IMR-90 (cell line): ENCODE measurements at regions of chr1 and their contacts with region 1.

Region 1: DNA sequence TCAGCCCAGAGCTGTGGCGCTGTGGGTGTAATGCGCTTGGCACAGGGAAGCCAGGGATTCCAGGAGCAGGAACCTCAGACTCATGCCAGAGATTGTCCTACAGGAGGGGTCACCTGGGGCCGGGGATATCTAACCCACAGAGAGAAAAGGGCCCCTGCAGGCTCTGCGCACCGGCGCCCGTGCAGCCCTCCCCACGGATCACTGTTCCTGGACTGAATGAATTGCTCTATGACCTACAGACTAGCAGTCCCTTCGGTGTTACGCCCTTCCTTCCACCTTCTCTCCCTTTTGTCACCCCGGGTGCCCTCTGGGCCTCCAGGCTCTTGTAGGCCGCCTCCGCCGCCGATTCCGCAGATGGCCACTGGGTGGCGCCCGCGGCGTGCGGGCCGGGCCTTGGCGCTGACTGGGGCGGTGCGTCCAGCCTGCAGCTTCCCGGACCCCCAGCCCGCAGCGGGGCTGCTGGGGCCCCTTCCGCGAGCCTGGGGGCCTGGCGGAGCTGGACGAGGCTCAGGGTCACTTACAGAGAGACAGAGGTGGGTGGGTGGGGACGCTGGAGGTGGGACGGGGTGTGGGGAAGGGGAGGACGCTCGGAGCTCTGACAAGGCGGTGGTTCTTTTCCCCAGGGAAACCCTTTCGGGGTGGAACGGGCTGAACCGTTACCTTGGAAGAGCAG is 101.3 kb downstream of the IER5 start:
- DNase-seq: peak; percentile 29
- ATAC-seq: peak; percentile 99
- H3K4me3 ChIP-seq: peak overlapping the region; percentile 26; the same call in 1 of the 2 replicates
- H3K27ac ChIP-seq: no peak overlapping the region
- H3K4me1 ChIP-seq: no peaks in the 10 kb centered on the region
- H3K27me3 ChIP-seq: peaks cover 25% of the 10 kb centered on the region
- CTCF ChIP-seq: peak; percentile 96
- POLR2A ChIP-seq: no peak
- RAD21 ChIP-seq: peak; percentile 92

Region 2: DNA sequence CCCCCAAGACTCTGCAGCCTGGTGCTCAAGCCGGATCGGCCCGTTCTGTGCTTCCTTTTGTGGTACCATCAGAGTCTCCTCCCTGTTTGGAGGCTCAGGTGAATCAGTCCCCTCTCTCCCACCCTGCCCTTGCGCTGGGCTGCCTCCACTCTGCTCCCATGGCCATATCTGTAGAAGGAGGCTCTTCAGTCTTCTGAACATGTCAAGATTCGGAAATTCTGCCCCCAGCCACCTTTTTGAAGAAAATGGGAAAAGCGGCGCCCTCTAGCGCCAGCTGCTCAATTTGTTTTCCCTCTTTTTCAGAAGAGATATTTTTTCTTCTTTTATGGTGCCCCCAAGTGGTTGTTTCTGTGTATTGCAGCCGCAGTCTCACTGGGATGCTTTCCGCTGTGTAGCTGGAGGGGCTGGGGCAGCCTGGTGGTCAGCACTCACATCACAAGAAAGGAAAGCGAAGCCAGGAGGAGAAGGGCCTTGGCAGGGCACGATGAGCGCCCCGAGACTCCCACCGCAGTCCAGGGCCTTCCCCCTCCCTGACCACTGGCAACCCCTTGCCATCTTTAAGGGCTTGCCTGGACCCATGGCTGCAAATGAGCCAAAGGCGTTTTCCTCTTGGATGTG is 235.1 kb after region 1 on chr1:
- CTCF ChIA-PET with region 1: interaction called, 8 read pairs
- POLR2A ChIA-PET with region 1: no interaction called
- dilution Hi-C with region 1: no loop called
- in situ Hi-C with region 1: loop called (anchors 5 kb)
- intact Hi-C with region 1: loop called (anchors 1 kb)
- DNase-seq: peak; percentile 58
- ATAC-seq: peak; percentile 95
- H3K4me3 ChIP-seq: no peak overlapping the region
- H3K27ac ChIP-seq: no peak overlapping the region
- H3K4me1 ChIP-seq: no peaks in the 10 kb centered on the region
- H3K27me3 ChIP-seq: no peaks in the 10 kb centered on the region; the same call in 1 of the 2 replicates
- CTCF ChIP-seq: peak; percentile 99
- POLR2A ChIP-seq: no peak
- RAD21 ChIP-seq: peak; percentile 73

Region 3: GRCh38 chr1:182397771-182398393 is 1208.1 kb after region 1 on chr1:
- CTCF ChIA-PET with region 1: no interaction called
- POLR2A ChIA-PET with region 1: no interaction called
- dilution Hi-C with region 1: no loop called
- in situ Hi-C with region 1: no loop called
- intact Hi-C with region 1: loop called (anchors 5 kb)
- DNase-seq: peak; percentile 33
- ATAC-seq: no peak; the same call in 1 of the 2 replicates
- H3K4me3 ChIP-seq: no peak overlapping the region
- H3K27ac ChIP-seq: no peak overlapping the region
- H3K4me1 ChIP-seq: no peaks in the 10 kb centered on the region; the same call in none of the 2 replicates
- H3K27me3 ChIP-seq: no peaks in the 10 kb centered on the region
- CTCF ChIP-seq: no peak
- POLR2A ChIP-seq: no peak
- RAD21 ChIP-seq: no peak